Motor neuron (in vitro differentiated cells): ENCODE measurements at regions of chr4 and their contacts with region 1.

Region 1: GRCh38 chr4:118898684-118899138 is 10.1 kb downstream of the SYNPO2 start:
- ATAC-seq: no peak
- H3K4me3 ChIP-seq: no peak overlapping the region
- H3K27ac ChIP-seq: no peak overlapping the region
- H3K4me1 ChIP-seq: no peaks in the 10 kb centered on the region

Region 2: GRCh38 chr4:118954246-118954645 is 55.5 kb after region 1 on chr4:
- in situ Hi-C with region 1: loop called in 1 of 9 experiments (anchors 10 kb)
- ATAC-seq: peak in 3 of 8 experiments; percentile 42 to 78 (median 73)
- H3K4me3 ChIP-seq: no peak overlapping the region
- H3K27ac ChIP-seq: no peak overlapping the region
- H3K4me1 ChIP-seq: no peaks in the 10 kb centered on the region